ENCODE measurements at regions of chr7 and their contacts with region 1.

Region 1: GRCh38 chr7:102272075-102272917 is 14.4 kb upstream of the SH2B2 start:
- DNase-seq: peak; percentile 90
- ATAC-seq: peak; percentile 93

Region 2: DNA sequence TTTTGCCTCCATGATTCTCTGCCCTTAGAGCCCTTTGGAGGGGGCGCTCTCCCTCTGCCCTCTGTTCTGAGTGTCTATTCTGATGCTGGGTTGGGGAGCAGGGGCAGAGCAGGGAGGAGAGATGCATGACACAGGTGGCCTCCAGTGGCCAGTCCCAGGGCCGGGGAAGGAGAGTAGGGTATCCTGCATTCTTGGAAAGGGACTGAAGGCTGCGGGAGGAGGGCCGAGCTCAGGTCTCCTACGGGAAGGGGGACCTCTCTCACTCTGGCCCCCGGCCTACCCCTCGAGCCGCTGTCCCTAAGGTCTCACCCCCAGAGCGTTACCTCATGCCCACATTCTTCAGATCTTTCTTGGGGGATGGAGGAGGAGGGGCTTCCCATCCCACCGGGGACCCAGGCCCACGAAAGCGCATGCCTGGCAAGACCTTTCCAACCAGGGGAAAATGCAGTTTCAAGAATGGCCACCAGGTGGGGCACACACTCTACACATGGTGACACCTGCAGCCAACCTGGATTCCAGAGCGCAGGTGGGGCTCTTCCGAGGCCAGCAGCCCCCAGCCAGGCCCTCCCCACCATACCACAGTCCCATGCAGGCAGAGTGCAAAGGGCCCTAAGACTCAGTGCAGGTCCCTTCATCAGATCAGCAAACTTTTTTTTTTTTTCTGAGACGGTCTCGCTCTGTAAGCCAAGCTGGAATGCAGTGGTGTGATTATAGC is 729.6 kb before region 1 on chr7:
- intact Hi-C with region 1: loop called (anchors 2 kb)
- DNase-seq: peak; percentile 87
- ATAC-seq: peak; percentile 40

Region 3: GRCh38 chr7:101602484-101603241 is 669.6 kb before region 1 on chr7:
- intact Hi-C with region 1: loop called (anchors 5 kb)
- DNase-seq: peak; percentile 90
- ATAC-seq: peak; percentile 91

Measured in sciatic nerve (tissue), 2 donors.